ENCODE measurements at regions of chr12 and their contacts with region 1.

Region 1: GRCh38 chr12:2324387-2324786 is 271.6 kb downstream of the CACNA1C start:
- DNase-seq: no peak
- H3K4me3 ChIP-seq: no peak overlapping the region
- H3K4me3 Mint-ChIP-seq: no peak overlapping the region
- H3K27ac ChIP-seq: no peak overlapping the region
- H3K27ac Mint-ChIP-seq: peak overlapping the region in 1 of 7 donors; percentile 65
- H3K4me1 ChIP-seq: peaks cover 25% of the 10 kb centered on the region in 2 donors
- H3K4me1 Mint-ChIP-seq: peaks cover 32% of the 10 kb centered on the region
- H3K27me3 ChIP-seq: no peaks in the 10 kb centered on the region
- H3K27me3 Mint-ChIP-seq: peaks cover 3 to 5% (median 3%) of the 10 kb centered on the region in 3 donors
- CTCF ChIP-seq: no peak

Region 2: DNA sequence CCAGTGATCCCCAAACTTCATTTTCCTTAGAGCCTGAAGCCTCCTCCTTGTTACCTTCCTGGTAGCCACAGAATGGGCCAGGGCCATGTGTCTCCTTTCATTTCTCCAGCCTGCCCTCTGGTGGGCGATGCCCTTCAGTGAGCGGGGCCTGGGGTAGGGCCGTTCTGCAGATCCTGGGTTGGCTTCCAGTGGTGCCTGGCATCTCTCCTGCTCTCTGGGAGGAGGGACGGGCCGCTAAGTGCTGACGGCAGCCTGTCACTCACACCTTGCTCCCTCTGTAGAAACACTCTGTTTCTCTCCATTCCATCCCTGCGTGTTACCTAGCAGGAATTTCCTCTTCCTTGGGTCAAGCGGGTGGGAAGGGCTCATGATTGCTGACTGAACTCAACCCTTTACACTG is 39.5 kb before region 1 on chr12:
- intact Hi-C with region 1: loop called in 1 of 2 experiments (anchors 5 kb)
- DNase-seq: peak; percentile 43 to 61 (median 55)
- H3K4me3 ChIP-seq: peak overlapping the region in 1 of 3 experiments; percentile 51
- H3K4me3 Mint-ChIP-seq: peak overlapping the region; percentile 72 to 85
- H3K27ac ChIP-seq: peak overlapping the region in 1 of 2 donors; percentile 8
- H3K27ac Mint-ChIP-seq: peak overlapping the region; percentile 21 to 84 (median 77)
- H3K4me1 ChIP-seq: peaks cover 61 to 66% of the 10 kb centered on the region in 2 donors
- H3K4me1 Mint-ChIP-seq: peaks cover 67% of the 10 kb centered on the region
- H3K27me3 ChIP-seq: no peaks in the 10 kb centered on the region
- H3K27me3 Mint-ChIP-seq: peaks cover 0 to 1% (median 1%) of the 10 kb centered on the region in 3 donors
- CTCF ChIP-seq: peak; percentile 78

Region 3: DNA sequence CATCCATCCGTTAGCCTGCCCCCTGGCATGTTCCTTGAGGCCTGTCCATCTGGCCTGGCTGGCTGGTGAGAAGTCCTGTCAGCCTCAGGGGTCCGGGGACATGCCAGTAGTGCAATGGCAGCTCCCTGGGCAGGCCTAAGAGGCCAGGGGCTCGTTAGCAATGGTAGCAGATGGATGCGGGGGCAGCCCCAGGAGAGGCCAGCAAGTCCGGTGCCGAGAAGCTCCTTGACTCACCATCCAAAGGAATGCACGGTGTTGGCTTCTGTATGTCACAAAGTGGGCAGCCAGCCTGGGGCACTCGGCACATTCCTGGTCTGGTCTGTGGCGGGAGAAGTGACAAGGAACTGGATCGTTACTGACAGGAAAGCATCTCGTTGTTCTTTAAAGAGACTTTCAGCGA is 48.3 kb after region 1 on chr12:
- intact Hi-C with region 1: loop called in 1 of 2 experiments (anchors 5 kb)
- DNase-seq: no peak
- H3K4me3 ChIP-seq: no peak overlapping the region
- H3K4me3 Mint-ChIP-seq: no peak overlapping the region
- H3K27ac ChIP-seq: no peak overlapping the region
- H3K27ac Mint-ChIP-seq: no peak overlapping the region
- H3K4me1 ChIP-seq: no peaks in the 10 kb centered on the region
- H3K4me1 Mint-ChIP-seq: no peaks in the 10 kb centered on the region
- H3K27me3 ChIP-seq: no peaks in the 10 kb centered on the region
- H3K27me3 Mint-ChIP-seq: peaks cover 0 to 8% (median 8%) of the 10 kb centered on the region in 3 donors
- CTCF ChIP-seq: no peak

Measured in CD14-positive monocyte (primary cell).